ENCODE measurements at regions of chr4 and their contacts with region 1.

Region 1: DNA sequence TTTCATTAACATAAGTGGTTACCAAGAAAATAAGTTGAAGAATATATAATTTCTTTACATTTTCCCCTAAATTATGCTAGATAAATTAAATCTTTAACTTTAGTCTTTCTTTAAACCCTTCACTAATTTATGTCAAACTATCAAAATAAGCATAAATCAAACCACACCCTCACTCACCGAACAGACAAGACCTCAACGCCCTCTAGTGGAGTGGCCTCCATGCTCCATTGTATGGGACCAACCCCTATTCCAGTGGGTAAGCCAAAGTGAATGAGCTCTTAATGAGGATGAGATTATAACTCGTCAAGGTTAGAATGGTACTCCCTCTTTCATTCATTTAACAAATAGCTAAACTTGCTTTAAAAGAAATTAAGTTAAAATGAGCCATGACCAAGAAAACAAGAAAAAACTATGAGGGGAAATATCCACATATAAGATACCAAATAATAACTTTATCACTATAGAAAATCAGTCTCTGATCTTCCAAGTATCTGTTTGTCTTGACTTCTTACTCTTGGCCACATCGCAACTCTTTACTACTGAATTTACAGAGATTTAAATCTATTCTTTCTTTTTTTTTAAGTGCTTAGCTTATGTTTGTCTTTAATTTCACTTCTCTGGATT is 15.6 kb upstream of the BBS12 start:
- DNase-seq: no peak
- H3K4me3 ChIP-seq: no peak overlapping the region
- CTCF ChIP-seq: peak; percentile 83

Region 2: GRCh38 chr4:122612540-122612939 is 104.4 kb before region 1 on chr4:
- CTCF ChIA-PET with region 1: interaction called, 14 read pairs
- POLR2A ChIA-PET with region 1: no interaction called
- DNase-seq: no peak
- H3K4me3 ChIP-seq: no peak overlapping the region
- CTCF ChIP-seq: no peak

Region 3: DNA sequence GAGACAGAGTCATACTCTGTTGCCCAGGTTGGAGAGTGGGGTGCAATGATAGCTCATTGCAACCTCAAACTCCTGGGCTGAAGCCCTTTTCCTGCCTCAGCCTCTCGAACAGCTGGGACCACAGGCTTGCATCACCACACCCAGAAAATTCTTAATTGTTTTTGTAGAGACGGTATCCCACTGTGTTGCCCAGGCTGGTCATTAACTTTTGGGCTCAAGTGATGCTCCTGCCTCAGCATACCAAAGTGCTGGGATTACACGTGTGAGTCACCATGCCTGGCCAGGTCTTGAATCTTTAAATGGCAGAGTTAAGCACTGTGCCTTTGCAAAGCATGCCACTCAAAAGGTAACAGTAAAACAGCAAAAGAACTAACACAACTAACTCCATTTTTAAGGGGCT is 13.1 kb before region 1 on chr4:
- CTCF ChIA-PET with region 1: interaction called, 30 read pairs
- POLR2A ChIA-PET with region 1: no interaction called
- DNase-seq: no peak
- H3K4me3 ChIP-seq: no peak overlapping the region
- CTCF ChIP-seq: no peak

Region 4: GRCh38 chr4:122732329-122733026 is 15.5 kb after region 1 on chr4 and contains the start of gene BBS12:
- CTCF ChIA-PET with region 1: interaction called, 45 read pairs
- POLR2A ChIA-PET with region 1: interaction called, 3 read pairs
- DNase-seq: peak; percentile 95
- H3K4me3 ChIP-seq: peak within 1 kb of the TSS; percentile 82
- CTCF ChIP-seq: peak; percentile 74

Region 5: DNA sequence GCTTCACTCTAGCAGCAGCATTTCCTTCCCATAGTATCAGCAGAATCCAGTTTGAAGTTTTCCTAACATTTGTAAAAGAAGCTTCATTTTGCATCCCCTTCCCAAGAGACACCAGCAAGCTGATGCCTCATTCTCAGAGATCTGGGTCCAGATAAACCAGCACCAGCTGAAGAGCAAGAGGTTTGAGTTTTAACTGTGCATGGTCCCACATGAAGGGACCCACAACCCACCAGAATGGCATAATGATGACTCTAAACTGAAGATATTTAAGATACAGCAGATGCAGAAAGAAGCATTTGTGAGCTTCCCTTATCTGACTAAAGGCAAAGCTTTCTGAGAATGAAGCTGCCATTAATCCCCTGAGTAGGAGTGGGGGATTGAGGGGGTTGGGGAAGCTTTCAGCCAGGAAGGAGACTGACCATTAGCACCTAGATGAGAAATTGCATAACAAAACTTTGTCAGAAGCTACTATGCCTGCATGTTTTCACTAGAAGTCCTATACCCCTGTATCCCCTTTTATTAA is 186.9 kb after region 1 on chr4:
- CTCF ChIA-PET with region 1: no interaction called
- POLR2A ChIA-PET with region 1: no interaction called
- DNase-seq: no peak
- H3K4me3 ChIP-seq: no peak overlapping the region
- CTCF ChIP-seq: no peak

Region 6: GRCh38 chr4:122930862-122931261 is 213.9 kb after region 1 on chr4:
- CTCF ChIA-PET with region 1: interaction called, 24 read pairs
- POLR2A ChIA-PET with region 1: no interaction called
- DNase-seq: no peak
- H3K4me3 ChIP-seq: no peak overlapping the region
- CTCF ChIP-seq: no peak